ENCODE measurements at regions of chr4 and their contacts with region 1.

Region 1: GRCh38 chr4:119628308-119629141 is at the start of gene PDE5A:
- DNase-seq: peak; percentile 78
- H3K4me3 ChIP-seq: peak within 1 kb of the TSS; percentile 74 to 78 (median 78)
- H3K27ac ChIP-seq: no peak within 1 kb of the TSS
- H3K4me1 ChIP-seq: peaks cover 14% of the 10 kb centered on the region
- H3K27me3 ChIP-seq: peaks cover 0 to under 1% of the 10 kb centered on the region in 2 experiments
- CTCF ChIP-seq: peak; percentile 71 to 79
- POLR2A ChIP-seq: no peak
- total RNA-seq, gene PDE5A: 2.3 and 3.2 TPM in 2 replicates

Region 2: DNA sequence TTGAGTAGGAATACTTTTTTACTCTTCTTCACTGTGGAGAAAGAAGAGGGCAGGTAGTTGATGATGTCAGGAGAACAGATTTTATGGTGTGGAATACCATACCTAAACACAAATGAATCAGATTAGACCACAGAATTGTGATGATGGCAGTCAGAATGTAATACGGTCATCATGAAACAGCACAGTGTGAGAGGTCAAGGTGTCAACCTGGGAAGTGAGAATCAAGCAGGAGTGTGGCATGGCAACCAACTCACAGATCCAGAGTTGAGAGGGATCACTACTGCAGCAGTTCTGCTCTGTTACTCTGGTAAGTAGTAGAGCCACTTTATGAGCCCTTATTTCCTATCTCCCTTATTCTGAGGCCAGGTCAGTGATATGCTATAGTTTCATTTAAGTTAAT is 915.7 kb before region 1 on chr4:
- CTCF ChIA-PET with region 1: no interaction called
- POLR2A ChIA-PET with region 1: no interaction called
- dilution Hi-C with region 1: no loop called
- intact Hi-C with region 1: no loop called
- DNase-seq: no peak
- H3K4me3 ChIP-seq: no peak overlapping the region
- H3K27ac ChIP-seq: no peak overlapping the region
- H3K4me1 ChIP-seq: no peaks in the 10 kb centered on the region
- H3K27me3 ChIP-seq: no peaks in the 10 kb centered on the region
- CTCF ChIP-seq: no peak
- POLR2A ChIP-seq: no peak

Region 3: DNA sequence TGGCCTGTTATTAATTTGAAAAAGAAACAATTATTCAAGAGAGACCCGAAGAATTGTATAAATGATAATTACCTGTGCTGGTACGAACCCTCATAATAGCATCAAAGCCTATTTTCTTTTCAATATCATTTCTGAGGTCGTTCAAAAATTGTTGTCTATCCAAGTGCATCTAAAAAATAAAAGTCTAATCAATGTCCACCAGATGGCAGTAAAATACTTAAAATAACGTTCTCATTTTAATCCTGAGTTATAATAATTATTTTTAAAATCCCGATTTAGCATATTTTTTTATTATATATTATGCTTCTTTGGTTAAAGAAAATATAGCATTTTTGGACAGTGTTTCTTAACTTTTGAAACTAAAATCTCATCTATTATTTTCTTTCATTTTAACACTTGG is 887.7 kb before region 1 on chr4:
- CTCF ChIA-PET with region 1: no interaction called
- POLR2A ChIA-PET with region 1: no interaction called
- dilution Hi-C with region 1: no loop called
- intact Hi-C with region 1: loop called (anchors 5 kb)
- DNase-seq: no peak
- H3K4me3 ChIP-seq: no peak overlapping the region
- H3K27ac ChIP-seq: no peak overlapping the region
- H3K4me1 ChIP-seq: peaks cover 2% of the 10 kb centered on the region
- H3K27me3 ChIP-seq: no peaks in the 10 kb centered on the region
- CTCF ChIP-seq: peak in 1 of 2 donors; percentile 3
- POLR2A ChIP-seq: no peak

Region 4: DNA sequence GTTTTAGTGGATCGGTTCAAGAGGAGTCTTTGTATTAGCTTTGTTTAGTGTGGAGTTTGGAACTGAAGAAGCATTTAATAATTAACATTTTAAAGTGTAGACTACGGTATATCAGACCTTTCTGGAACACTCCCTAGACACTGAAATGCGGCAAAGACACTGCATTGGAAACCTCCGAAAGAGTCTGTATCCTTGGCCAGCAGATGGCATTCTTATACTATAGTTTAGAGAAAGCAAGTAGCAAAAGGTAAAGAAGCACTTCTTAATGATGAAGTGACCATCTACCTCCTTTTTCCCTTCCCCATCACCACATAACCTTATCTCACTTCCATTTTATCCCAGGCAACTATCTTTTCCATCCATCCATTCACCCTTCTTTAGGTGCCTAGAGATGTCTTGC is 314.2 kb before region 1 on chr4:
- CTCF ChIA-PET with region 1: interaction called, 15 read pairs
- POLR2A ChIA-PET with region 1: no interaction called
- dilution Hi-C with region 1: no loop called
- intact Hi-C with region 1: loop called (anchors 1 kb)
- DNase-seq: peak; percentile 53
- H3K4me3 ChIP-seq: no peak overlapping the region
- H3K27ac ChIP-seq: no peak overlapping the region
- H3K4me1 ChIP-seq: no peaks in the 10 kb centered on the region
- H3K27me3 ChIP-seq: peaks cover 5 to 15% of the 10 kb centered on the region in 2 experiments
- CTCF ChIP-seq: peak; percentile 23 to 41
- POLR2A ChIP-seq: no peak

Region 5: DNA sequence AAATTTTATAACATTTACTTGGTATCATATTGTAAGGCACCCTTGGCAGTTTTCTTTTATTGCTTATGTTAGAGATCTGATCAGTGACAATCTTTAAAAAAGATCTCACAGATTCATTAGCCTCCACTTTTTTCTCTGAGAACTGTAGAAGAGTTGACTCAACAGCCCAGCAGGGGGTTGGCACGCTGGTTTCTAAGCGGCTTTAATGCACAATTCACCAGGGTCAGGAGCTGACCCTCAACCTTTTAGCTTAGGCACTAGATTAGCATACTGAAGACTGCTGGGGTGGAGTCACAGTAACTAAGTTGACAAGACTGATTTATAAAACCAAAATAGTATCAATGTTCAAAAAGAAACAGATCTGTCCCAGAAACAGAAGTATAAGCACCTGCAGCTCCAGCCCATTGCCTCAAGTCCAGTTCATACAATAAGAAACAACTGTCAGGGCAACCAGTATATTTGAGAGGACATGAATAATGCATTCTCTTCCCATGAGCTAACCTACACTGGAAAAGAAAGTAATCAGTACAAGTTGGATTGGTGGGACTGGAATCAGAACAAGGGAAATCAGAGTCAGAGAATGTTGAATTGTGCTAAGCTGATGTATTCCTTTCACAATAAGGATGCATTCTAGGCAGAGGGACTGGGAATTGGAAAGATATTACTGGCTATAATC is 77.5 kb before region 1 on chr4:
- CTCF ChIA-PET with region 1: interaction called, 83 read pairs
- POLR2A ChIA-PET with region 1: no interaction called
- dilution Hi-C with region 1: no loop called
- intact Hi-C with region 1: no loop called
- DNase-seq: no peak
- H3K4me3 ChIP-seq: no peak overlapping the region
- H3K27ac ChIP-seq: no peak overlapping the region
- H3K4me1 ChIP-seq: no peaks in the 10 kb centered on the region
- H3K27me3 ChIP-seq: no peaks in the 10 kb centered on the region
- CTCF ChIP-seq: no peak
- POLR2A ChIP-seq: no peak

Region 6: DNA sequence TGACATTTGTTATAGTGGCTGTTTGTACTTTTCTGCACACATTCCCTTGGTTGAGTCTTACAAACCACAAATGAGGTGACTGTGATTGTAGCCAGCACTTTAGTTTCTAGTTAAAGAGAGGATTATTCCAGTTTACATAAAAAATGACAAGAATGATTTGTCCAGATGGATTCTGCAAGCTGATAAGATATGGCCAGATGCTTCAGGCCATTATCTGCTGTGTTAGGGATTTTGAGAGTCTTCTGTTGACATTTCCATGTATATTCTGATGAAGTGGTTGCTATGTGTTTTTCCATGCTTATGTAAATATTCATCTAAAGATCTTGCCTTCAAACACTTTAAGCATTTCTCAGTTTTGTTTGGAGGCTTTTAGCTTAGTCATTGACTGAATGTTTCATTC is 31.1 kb after region 1 on chr4:
- CTCF ChIA-PET with region 1: interaction called, 49 read pairs
- POLR2A ChIA-PET with region 1: no interaction called
- dilution Hi-C with region 1: no loop called
- intact Hi-C with region 1: no loop called
- DNase-seq: no peak
- H3K4me3 ChIP-seq: no peak overlapping the region
- H3K27ac ChIP-seq: no peak overlapping the region
- H3K4me1 ChIP-seq: peaks cover 19% of the 10 kb centered on the region
- H3K27me3 ChIP-seq: no peaks in the 10 kb centered on the region
- CTCF ChIP-seq: no peak
- POLR2A ChIP-seq: no peak

Region 7: DNA sequence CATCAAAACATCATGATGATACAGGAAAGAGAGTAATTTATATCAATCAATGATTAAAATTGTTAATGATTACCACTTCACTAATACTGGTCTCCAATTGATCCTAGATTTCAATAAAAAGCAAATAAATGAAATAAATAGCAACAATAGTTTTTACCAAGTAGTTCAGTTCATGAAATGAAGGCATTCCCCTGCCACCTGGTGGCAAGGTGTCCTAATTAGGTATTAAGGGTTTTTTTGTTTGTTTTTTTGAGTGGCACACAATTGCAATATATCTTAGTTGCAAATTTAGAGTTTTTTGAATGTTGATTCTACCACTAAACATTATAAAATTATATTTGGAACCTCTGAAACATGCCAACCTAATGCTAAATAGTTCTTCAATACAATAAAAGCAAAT is 157.4 kb after region 1 on chr4:
- CTCF ChIA-PET with region 1: interaction called, 30 read pairs
- POLR2A ChIA-PET with region 1: no interaction called
- dilution Hi-C with region 1: no loop called
- intact Hi-C with region 1: loop called (anchors 1 kb)
- DNase-seq: peak; percentile 20
- H3K4me3 ChIP-seq: no peak overlapping the region
- H3K27ac ChIP-seq: no peak overlapping the region
- H3K4me1 ChIP-seq: no peaks in the 10 kb centered on the region
- H3K27me3 ChIP-seq: peaks cover 2 to 4% of the 10 kb centered on the region in 2 experiments
- CTCF ChIP-seq: no peak
- POLR2A ChIP-seq: no peak

Measured in endothelial cell of umbilical vein (primary cell).